ENCODE measurements at regions of chr15 and their contacts with region 1.

Region 1: DNA sequence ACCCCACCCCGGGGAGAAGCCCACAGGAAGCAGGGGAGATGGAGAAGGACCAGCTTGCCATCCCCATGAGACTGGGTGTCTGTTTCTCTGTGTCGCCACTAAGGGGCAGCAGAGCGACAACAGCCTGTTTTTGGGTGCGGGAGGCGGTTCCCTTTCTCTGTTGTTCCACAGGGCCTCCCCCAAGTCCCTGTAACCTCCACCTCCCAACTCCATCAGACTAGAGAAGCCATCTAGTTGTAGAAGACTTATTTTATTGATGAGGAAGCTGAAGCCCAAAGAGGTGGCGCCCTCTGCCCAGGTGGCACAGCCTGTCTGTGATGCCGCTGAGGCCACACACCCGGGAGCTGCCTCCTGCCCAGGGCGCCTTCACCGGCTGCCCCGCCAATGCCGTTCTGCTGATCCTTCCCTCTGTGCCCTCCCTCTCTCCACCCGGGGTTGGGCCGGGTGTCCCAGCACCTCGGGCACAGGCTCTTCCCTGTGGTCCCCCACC is 3.9 kb upstream of the CCDC9B start:
- DNase-seq: peak; percentile 83
- ATAC-seq: peak; percentile 86
- H3K4me3 Mint-ChIP-seq: no peak overlapping the region
- H3K27ac Mint-ChIP-seq: no peak overlapping the region
- H3K4me1 Mint-ChIP-seq: no peaks in the 10 kb centered on the region
- H3K27me3 Mint-ChIP-seq: no peaks in the 10 kb centered on the region

Region 2: DNA sequence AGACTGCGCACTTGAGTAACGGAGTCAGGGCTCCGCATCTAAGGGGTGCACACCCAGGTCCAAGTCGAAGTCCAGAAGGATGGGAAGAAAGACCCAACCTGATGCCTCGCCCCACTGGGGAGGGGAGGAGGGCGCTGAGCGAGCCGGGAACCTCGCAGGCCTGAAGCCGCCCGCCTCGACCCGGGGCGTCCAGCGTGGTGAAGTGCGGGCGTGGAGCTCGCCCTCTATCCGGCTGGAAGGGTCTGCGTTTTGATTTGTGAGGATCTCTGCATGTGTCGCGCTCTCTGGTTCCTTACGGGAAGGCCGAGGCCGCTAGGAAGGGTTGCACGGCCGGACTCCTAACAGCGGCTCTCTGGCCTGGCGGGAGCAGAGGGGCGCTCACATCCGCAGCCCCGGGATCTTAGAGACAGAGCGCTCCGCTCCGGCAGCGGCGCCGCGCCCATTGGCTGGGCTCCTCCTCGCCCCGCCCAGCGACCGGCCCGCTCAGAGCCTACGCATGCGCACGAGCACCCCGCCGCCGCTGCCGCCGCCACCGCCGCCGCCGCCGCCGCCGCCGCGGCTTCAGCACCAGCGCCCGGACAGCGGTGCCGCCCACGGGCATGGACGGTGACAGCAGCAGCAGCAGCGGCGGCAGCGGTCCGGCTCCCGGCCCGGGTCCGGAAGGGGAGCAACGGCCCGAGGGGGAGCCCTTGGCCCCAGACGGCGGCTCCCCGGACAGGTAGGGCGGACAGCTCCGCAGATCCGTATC is 13.2 kb after region 1 on chr15 and contains the start of gene DISP2:
- CTCF ChIA-PET with region 1: interaction called, 49 read pairs
- DNase-seq: peak; percentile 89
- ATAC-seq: peak; percentile 93
- H3K4me3 Mint-ChIP-seq: peak within 1 kb of the TSS; percentile 70
- H3K27ac Mint-ChIP-seq: no peak within 1 kb of the TSS
- H3K4me1 Mint-ChIP-seq: peaks cover 9% of the 10 kb centered on the region
- H3K27me3 Mint-ChIP-seq: peaks cover 10% of the 10 kb centered on the region
- total RNA-seq, gene DISP2: 0.23 to 0.37 TPM

Region 3: GRCh38 chr15:40405501-40406381 is 61.1 kb after region 1 on chr15 and contains the start of gene IVD:
- CTCF ChIA-PET with region 1: interaction called, 24 read pairs
- DNase-seq: peak; percentile 97
- ATAC-seq: peak; percentile 99
- H3K4me3 Mint-ChIP-seq: peak within 1 kb of the TSS; percentile 76
- H3K27ac Mint-ChIP-seq: peak within 1 kb of the TSS; percentile 90
- H3K4me1 Mint-ChIP-seq: peaks cover 54% of the 10 kb centered on the region
- H3K27me3 Mint-ChIP-seq: no peaks in the 10 kb centered on the region
- total RNA-seq, gene IVD: 70.3 to 87.2 TPM

Measured in activated CD8-positive, alpha-beta memory T cell treated with anti-CD3 and anti-CD28 coated beads, Interleukin-2, amount 10 ng/mL, durations not matched to agents 7 days and 5 days (primary cell).